MCF 10A (cell line): ENCODE measurements at regions of chr4 and their contacts with region 1.

Region 1: DNA sequence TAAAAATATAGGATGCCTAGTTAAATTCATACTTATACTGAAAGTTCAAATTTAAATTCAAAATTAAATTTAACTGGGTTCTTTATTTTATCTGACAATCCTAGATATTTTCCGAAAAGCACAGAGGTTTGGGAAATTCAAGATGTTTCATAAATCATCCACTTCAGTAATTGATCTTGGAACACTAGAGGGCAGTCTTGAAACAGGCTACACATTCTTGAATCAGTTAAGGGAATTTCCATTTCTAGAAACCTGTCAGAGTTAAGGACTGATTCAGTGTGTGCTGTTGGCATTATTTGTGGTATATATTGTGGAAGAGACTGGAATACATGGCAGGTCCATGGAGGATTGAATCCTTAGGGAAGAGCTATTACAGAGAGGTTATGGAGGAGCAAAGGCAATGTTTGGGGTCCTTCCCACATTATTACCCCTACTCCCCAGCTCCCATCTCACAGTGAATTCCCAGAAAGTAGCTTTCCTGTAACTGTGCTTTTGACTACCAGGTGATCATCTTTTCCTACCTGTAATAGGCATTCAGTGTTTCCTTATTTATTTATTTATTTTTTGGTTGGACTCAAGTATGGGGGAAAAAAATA is 92.9 kb downstream of the EGF start:
- DNase-seq: peak; percentile 77
- H3K4me3 Mint-ChIP-seq: no peak overlapping the region
- H3K27ac Mint-ChIP-seq: no peak overlapping the region
- H3K4me1 Mint-ChIP-seq: peaks cover 6% of the 10 kb centered on the region
- H3K27me3 Mint-ChIP-seq: no peaks in the 10 kb centered on the region
- CTCF ChIP-seq: peak; percentile 64

Region 2: DNA sequence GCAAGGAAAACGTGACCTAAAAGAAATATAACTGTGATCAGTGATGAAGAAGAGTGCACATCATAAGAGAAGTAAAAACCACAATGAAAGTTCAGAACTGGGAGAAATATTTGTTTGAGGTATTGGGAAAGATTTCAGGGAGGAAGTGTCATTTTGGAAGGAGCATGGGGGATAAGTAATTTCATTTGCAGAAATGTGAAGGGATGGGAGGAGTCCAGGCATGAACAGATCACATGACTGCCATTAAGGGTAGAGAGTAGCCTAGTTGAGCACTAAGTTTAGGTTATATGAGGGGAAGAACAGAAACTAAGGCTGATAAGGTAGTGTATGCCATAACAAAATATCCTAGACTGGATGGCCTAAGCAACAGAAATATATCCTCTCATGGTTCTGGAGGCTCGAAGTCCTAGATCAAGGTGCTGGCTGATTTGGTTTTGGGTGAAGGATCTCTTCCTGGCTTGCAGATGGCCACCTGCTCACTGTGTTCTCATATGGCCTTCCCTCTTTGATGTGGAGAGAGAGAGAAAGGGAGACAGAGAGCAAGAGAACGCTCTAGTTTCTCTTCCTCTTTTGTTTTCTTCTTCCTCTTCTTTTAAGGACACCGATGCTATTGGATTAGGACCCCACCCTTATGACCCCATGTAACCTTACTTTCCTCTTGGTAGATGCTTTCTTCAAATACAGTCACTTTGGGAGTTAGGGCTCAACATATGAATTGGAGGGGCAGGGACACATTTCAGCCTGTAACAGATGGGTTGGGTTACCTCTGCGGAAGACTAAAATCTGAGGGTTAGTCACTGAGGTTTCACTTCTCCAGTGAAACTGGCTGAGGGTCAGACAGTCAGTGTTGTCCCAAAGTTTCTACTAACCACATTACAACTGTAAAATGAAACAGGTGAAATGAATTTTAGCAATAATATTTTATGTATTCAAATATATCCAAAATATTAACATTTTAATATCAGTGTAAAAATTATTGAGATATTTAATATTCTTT is 15.0 kb before region 1 on chr4:
- CTCF ChIA-PET with region 1: interaction called, 10 read pairs
- POLR2A ChIA-PET with region 1: interaction called, 4 read pairs
- intact Hi-C with region 1: no loop called
- DNase-seq: no peak
- H3K4me3 Mint-ChIP-seq: no peak overlapping the region
- H3K27ac Mint-ChIP-seq: peak overlapping the region; percentile 90
- H3K4me1 Mint-ChIP-seq: peaks cover 25% of the 10 kb centered on the region
- H3K27me3 Mint-ChIP-seq: no peaks in the 10 kb centered on the region
- CTCF ChIP-seq: no peak

Region 3: DNA sequence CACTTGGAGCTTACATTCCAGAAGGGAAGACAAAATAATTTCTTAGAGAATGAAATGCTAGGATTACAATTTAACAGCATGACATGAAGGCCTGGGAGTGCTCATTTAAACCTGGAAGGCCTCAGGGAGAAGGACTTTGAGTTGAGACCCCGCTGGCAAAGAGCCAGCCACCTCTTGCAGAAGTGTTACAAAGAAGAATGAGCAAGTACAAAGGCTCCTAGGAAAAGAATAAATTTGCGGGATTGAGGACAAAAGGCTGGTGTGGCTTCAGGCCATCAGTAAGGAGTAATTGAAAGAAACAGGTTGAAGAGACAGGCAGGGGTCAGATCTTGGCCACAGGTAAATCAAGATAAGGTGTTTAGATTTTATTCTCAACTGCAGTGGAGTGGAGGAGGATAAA is 195.9 kb after region 1 on chr4:
- CTCF ChIA-PET with region 1: interaction called, 6 read pairs
- POLR2A ChIA-PET with region 1: interaction called, 4 read pairs
- intact Hi-C with region 1: loop called (anchors 2 kb)
- DNase-seq: no peak
- H3K4me3 Mint-ChIP-seq: no peak overlapping the region
- H3K27ac Mint-ChIP-seq: no peak overlapping the region
- H3K4me1 Mint-ChIP-seq: peaks cover 6% of the 10 kb centered on the region
- H3K27me3 Mint-ChIP-seq: no peaks in the 10 kb centered on the region
- CTCF ChIP-seq: no peak

Region 4: GRCh38 chr4:110510955-110511544 is 505.5 kb after region 1 on chr4:
- CTCF ChIA-PET with region 1: interaction called, 744 read pairs
- POLR2A ChIA-PET with region 1: interaction called, 5 read pairs
- intact Hi-C with region 1: loop called (anchors 1 kb)
- DNase-seq: peak; percentile 68
- H3K4me3 Mint-ChIP-seq: no peak overlapping the region
- H3K27ac Mint-ChIP-seq: no peak overlapping the region
- H3K4me1 Mint-ChIP-seq: no peaks in the 10 kb centered on the region
- H3K27me3 Mint-ChIP-seq: no peaks in the 10 kb centered on the region
- CTCF ChIP-seq: peak; percentile 84

Region 5: DNA sequence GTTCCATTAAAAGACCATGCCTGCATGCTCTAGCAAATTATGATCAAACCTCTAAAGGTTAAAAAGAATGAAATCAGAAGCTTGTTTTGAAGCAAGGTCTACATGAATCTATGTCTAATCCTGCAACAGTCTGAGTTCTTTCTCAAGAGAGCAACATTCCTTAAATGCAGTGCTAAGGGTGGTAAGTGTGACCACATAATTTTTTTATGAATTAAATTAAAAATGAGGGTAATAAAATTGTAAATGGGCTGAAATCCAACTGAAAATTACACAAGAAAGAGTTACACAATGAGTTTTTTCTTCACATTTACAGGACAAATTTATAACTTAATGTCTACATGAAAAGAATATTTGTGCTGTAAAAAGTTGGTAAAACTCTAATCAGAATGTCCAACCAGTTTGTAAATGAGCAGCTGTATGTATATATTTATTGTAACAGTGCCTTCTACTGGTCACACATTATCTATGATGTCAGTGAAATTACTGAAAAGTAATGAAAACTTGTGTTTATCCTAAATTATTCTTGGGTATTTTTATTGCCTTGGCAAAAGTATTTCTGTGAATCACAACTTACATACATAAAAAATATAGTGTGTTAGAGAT is 953.6 kb after region 1 on chr4:
- CTCF ChIA-PET with region 1: no interaction called
- POLR2A ChIA-PET with region 1: no interaction called
- intact Hi-C with region 1: loop called (anchors 10 kb)
- DNase-seq: peak; percentile 21
- H3K4me3 Mint-ChIP-seq: no peak overlapping the region
- H3K27ac Mint-ChIP-seq: no peak overlapping the region
- H3K4me1 Mint-ChIP-seq: no peaks in the 10 kb centered on the region
- H3K27me3 Mint-ChIP-seq: peaks cover 55% of the 10 kb centered on the region
- CTCF ChIP-seq: peak; percentile 46